Activated CD4-positive, alpha-beta T cell treated with anti-CD3 and anti-CD28 coated beads, Interleukin-2, amount 10 ng/mL, durations not matched to agents 24 days and 14 days (primary cell): ENCODE measurements at regions of chr19 and their contacts with region 1.

Region 1: DNA sequence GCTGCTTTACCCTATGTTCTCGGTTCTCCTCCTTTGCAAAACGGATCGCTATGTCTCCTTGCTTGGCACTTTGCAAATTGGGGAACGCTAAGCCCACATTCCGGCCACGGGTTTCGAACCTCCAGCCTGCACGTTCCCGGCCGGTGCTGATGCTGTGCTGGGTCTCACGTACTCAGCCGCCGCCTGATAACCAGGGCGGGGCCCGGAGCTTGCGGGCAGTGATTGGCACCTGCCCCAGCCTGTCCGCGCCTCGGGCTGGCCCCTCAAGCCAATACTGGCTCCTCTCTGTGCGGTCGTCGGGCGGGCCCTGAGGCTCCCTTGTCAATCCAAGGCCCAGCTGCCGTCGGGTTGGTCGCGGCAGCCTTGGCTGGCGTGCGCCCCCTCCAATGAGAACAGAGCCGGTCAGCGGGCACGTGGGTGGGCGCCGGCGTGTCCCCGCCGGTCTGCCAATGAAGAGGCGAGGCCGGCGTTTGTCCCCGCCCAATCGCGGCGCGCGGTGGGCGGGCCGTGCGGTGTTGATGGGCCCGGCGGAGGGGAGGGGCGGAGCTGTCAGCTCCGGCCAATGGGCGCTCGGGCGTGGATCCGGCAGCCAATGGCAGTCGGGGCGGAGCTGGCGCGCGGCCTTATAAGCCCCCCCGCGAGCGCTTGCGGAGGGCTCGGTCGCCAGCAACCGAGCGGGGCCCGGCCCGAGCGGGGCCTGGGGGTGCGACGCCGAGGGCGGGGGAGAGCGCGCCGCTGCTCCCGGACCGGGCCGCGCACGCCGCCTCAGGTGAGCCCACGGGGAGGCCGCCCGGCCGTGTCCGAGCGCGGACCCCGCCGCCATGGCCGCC is at the start of gene KDM4B:
- DNase-seq: peak; percentile 100
- H3K4me3 Mint-ChIP-seq: peak within 1 kb of the TSS; percentile 98
- H3K27ac Mint-ChIP-seq: peak within 1 kb of the TSS; percentile 94
- H3K4me1 Mint-ChIP-seq: peaks cover 39% of the 10 kb centered on the region
- H3K27me3 Mint-ChIP-seq: no peaks in the 10 kb centered on the region
- total RNA-seq, gene KDM4B: 49.2 and 52.0 TPM in 2 replicates

Region 2: GRCh38 chr19:4791170-4792018 is 177.3 kb before region 1 on chr19 and contains the start of gene FEM1A:
- intact Hi-C with region 1: loop called (anchors 1 kb)
- DNase-seq: peak; percentile 99
- H3K4me3 Mint-ChIP-seq: peak within 1 kb of the TSS; percentile 89
- H3K27ac Mint-ChIP-seq: peak within 1 kb of the TSS; percentile 91
- H3K4me1 Mint-ChIP-seq: peaks cover 14% of the 10 kb centered on the region
- H3K27me3 Mint-ChIP-seq: no peaks in the 10 kb centered on the region
- total RNA-seq, gene FEM1A: 22.9 and 23.3 TPM in 2 replicates

Region 3: DNA sequence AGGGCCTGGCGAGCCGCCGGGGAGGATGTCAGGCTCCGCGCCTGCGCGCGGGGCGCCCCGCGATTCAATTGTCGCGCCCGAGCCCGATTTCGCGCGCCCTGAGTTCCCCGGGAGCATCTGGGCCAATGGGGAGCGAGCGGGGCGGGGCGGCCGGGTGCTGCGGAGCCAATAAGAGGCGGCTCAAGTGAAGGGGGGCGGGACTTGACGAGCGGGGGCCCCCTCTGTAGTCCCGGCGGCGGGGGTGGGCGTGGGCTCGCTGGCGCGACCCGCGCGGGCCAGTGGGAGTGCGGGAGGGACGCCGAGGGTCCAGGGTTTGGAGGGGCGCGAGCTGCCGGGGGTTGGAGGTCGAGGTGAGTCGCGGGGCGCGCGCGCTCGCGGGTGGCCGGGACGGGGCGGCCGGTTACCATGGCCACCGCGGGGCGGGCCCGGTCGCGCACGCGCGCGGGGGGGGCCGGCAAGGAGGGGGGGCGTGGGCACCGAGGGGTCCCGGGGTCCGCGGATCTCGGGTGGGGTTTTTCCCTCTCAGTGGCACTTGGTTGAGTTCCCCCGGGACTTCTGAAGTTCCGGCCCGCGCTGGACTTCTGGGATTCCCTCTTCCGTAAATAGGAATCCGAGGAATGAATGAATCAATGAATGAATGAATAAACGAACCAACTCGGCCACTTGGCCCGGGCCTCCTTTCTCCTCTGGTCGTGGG is 58.6 kb before region 1 on chr19:
- intact Hi-C with region 1: loop called (anchors 1 kb)
- DNase-seq: peak; percentile 99
- H3K4me3 Mint-ChIP-seq: peak overlapping the region; percentile 86
- H3K27ac Mint-ChIP-seq: peak overlapping the region; percentile 86
- H3K4me1 Mint-ChIP-seq: peaks cover 35% of the 10 kb centered on the region
- H3K27me3 Mint-ChIP-seq: no peaks in the 10 kb centered on the region

Region 4: DNA sequence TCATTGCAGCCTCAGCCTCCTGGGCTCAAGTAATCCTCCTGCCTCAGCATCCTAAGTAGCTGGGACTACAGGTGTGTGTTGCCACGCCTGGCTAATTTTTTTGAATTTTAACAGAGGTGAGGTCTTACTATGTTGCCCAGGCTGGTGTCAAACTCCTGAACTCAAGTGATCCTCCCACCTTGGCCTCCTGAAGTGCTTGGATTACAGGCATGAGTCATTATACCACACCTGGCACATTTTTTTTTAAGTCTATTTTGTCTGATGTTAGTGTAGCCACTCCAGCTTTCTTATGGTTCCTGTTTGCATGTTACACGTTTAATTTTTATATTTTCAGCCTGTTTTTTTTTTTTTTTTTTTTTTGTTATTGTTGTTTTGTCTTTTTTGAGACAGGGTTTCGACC is 25.0 kb after region 1 on chr19:
- intact Hi-C with region 1: no loop called
- DNase-seq: no peak
- H3K4me3 Mint-ChIP-seq: no peak overlapping the region
- H3K27ac Mint-ChIP-seq: no peak overlapping the region
- H3K4me1 Mint-ChIP-seq: peaks cover 4% of the 10 kb centered on the region
- H3K27me3 Mint-ChIP-seq: no peaks in the 10 kb centered on the region